ENCODE measurements at regions of chr6 and their contacts with region 1.

Region 1: GRCh38 chr6:120230010-120230409 is 880.4 kb upstream of the MAN1A1 start:
- DNase-seq: peak in 1 of 2 experiments; percentile 38
- H3K4me3 ChIP-seq: no peak overlapping the region
- H3K4me3 Mint-ChIP-seq: no peak overlapping the region
- H3K27ac Mint-ChIP-seq: no peak overlapping the region
- H3K4me1 ChIP-seq: no peaks in the 10 kb centered on the region
- H3K4me1 Mint-ChIP-seq: peaks cover 6% of the 10 kb centered on the region
- H3K27me3 ChIP-seq: no peaks in the 10 kb centered on the region
- H3K27me3 Mint-ChIP-seq: no peaks in the 10 kb centered on the region
- CTCF ChIP-seq: peak; percentile 18 to 43

Region 2: GRCh38 chr6:120096696-120097260 is 133.2 kb before region 1 on chr6:
- CTCF ChIA-PET with region 1: no interaction called
- POLR2A ChIA-PET with region 1: no interaction called
- intact Hi-C with region 1: loop called (anchors 10 kb)
- DNase-seq: no peak
- H3K4me3 ChIP-seq: no peak overlapping the region
- H3K4me3 Mint-ChIP-seq: no peak overlapping the region
- H3K27ac Mint-ChIP-seq: no peak overlapping the region
- H3K4me1 ChIP-seq: no peaks in the 10 kb centered on the region
- H3K4me1 Mint-ChIP-seq: no peaks in the 10 kb centered on the region
- H3K27me3 ChIP-seq: no peaks in the 10 kb centered on the region
- H3K27me3 Mint-ChIP-seq: no peaks in the 10 kb centered on the region
- CTCF ChIP-seq: no peak

Region 3: GRCh38 chr6:120198033-120198432 is 32.0 kb before region 1 on chr6:
- CTCF ChIA-PET with region 1: no interaction called
- POLR2A ChIA-PET with region 1: no interaction called
- intact Hi-C with region 1: no loop called
- DNase-seq: no peak
- H3K4me3 ChIP-seq: no peak overlapping the region
- H3K4me3 Mint-ChIP-seq: no peak overlapping the region
- H3K27ac Mint-ChIP-seq: no peak overlapping the region
- H3K4me1 ChIP-seq: no peaks in the 10 kb centered on the region
- H3K4me1 Mint-ChIP-seq: peaks cover 6% of the 10 kb centered on the region
- H3K27me3 ChIP-seq: no peaks in the 10 kb centered on the region
- H3K27me3 Mint-ChIP-seq: no peaks in the 10 kb centered on the region
- CTCF ChIP-seq: no peak

Measured in Caco-2 (cell line).